ENCODE measurements at regions of chr6 and their contacts with region 1.

Region 1: GRCh38 chr6:34982424-34982852 is 93.4 kb downstream of the ANKS1A start:
- DNase-seq: peak; percentile 47

Region 2: GRCh38 chr6:34934516-34934915 is 47.9 kb before region 1 on chr6:
- in situ Hi-C with region 1: loop called (anchors 5 kb)
- DNase-seq: peak; percentile 25

Region 3: DNA sequence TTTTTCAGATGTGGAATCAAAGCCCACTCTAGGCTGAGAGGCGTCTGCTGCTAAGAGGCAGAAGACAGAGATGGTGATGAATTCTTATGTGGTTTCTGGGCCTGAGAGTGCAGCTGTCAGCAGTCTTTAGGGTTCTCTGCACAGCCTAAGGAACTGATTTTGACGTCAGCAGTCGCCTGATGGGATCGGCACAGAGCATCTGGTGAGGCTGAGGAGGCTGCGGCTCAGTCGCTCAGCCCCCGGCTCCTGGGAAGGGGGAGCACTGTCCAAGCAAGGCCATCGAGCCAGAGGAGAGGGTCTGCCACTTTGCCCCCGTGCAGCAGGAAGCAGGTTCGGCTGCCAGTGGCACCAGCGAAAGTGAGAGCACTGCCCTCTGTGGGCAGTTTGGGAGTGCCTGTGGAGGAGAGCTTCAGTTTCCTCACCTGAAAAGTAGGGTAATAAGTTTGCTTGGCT is 66.2 kb after region 1 on chr6:
- in situ Hi-C with region 1: no loop called
- DNase-seq: peak; percentile 27